Naive thymus-derived CD4-positive, alpha-beta T cell (primary cell): ENCODE measurements at regions of chr17 and their contacts with region 1.

Region 1: DNA sequence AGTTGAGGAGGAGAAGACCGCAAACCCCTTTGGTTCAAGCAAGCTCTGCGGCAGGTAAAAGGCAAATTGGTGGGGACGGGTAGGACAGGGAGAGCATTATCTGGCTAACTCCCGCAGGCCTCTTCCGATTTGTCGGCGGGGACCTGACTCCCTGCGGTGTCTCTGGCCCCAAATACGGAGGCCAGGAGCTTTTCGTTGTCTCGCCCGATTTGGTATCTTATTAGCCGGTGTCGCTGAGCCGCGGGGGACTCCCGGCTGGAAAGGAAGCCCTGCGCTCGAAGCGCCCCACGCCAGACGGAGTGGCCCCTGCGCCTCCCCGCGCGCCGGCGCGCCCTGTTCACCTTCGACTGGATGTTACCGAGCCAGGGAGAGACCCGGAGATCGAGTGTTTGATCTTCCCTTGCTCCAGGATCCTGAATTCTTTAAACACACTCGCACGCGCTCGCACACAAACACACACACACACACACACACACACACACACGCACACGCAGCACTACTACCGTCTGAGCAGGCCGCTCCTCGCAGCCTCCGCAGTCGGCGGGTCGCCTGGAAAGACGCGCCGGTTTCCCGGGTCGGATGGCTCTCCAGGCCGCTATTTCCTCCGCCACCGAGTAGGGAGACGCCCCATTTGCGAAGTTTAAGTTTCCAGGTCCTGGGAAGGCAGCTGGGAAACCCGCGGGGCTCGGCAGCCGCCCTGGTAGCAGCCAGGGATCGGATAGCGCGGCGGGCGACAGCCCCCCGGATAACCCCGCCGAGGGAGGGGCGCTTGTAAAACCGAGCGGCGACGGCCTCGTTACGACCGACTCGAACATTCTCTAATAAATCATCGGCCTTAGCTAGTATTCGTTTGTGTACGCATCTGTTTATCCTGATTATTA is 3.3 kb downstream of the PRAC1 start:
- DNase-seq: peak in 1 of 9 donors; percentile 28
- ATAC-seq: no peak
- H3K4me3 ChIP-seq: no peak overlapping the region
- H3K4me3 Mint-ChIP-seq: peak overlapping the region in 9 of 10 donors; percentile 25 to 73 (median 59)
- H3K27ac ChIP-seq: no peak overlapping the region
- H3K27ac Mint-ChIP-seq: peak overlapping the region in 5 of 9 donors; percentile 41 to 78 (median 55)
- H3K4me1 ChIP-seq: peaks cover 9 to 22% of the 10 kb centered on the region in 2 donors
- H3K4me1 Mint-ChIP-seq: peaks cover 9 to 49% (median 26%) of the 10 kb centered on the region in 7 donors
- H3K27me3 ChIP-seq: peaks cover 31 to 65% of the 10 kb centered on the region in 2 donors
- H3K27me3 Mint-ChIP-seq: peaks cover 61 to 96% (median 84%) of the 10 kb centered on the region in 5 donors

Region 2: GRCh38 chr17:47895856-47896671 is 822.9 kb before region 1 on chr17 and contains the start of gene SP2:
- CTCF ChIA-PET with region 1: no interaction called
- POLR2A ChIA-PET with region 1: no interaction called
- intact Hi-C with region 1: no loop called
- DNase-seq: peak; percentile 96 to 100 (median 100)
- ATAC-seq: peak; percentile 92
- H3K4me3 ChIP-seq: peak within 1 kb of the TSS; percentile 80
- H3K4me3 Mint-ChIP-seq: peak within 1 kb of the TSS; percentile 88 to 100 (median 97)
- H3K27ac ChIP-seq: peak within 1 kb of the TSS; percentile 98
- H3K27ac Mint-ChIP-seq: peak within 1 kb of the TSS; percentile 98 to 100 (median 99)
- H3K4me1 ChIP-seq: peaks cover 20 to 23% of the 10 kb centered on the region in 2 donors
- H3K4me1 Mint-ChIP-seq: peaks cover 31 to 66% (median 57%) of the 10 kb centered on the region in 7 donors
- H3K27me3 ChIP-seq: no peaks in the 10 kb centered on the region
- H3K27me3 Mint-ChIP-seq: peaks cover 0 to 4% (median 0%) of the 10 kb centered on the region in 5 donors
- total RNA-seq, gene SP2: 25.2 to 36.5 (median 30.8) TPM

Region 3: GRCh38 chr17:48734333-48735056 is 15.5 kb after region 1 on chr17:
- CTCF ChIA-PET with region 1: no interaction called
- POLR2A ChIA-PET with region 1: interaction called, 6 read pairs
- intact Hi-C with region 1: loop called in 1 of 2 experiments (anchors 2 kb)
- DNase-seq: no peak
- ATAC-seq: no peak
- H3K4me3 ChIP-seq: no peak overlapping the region
- H3K4me3 Mint-ChIP-seq: no peak overlapping the region
- H3K27ac ChIP-seq: no peak overlapping the region
- H3K27ac Mint-ChIP-seq: peak overlapping the region in 1 of 9 donors; percentile 41
- H3K4me1 ChIP-seq: peaks cover 0 to 12% of the 10 kb centered on the region in 2 donors
- H3K4me1 Mint-ChIP-seq: peaks cover 11 to 30% (median 20%) of the 10 kb centered on the region in 7 donors
- H3K27me3 ChIP-seq: peaks cover 21 to 42% of the 10 kb centered on the region in 2 donors
- H3K27me3 Mint-ChIP-seq: peaks cover 91 to 97% (median 94%) of the 10 kb centered on the region in 5 donors